Right ventricle myocardium inferior (tissue), 1 donor: ENCODE measurements at regions of chr15 and their contacts with region 1.

Region 1: GRCh38 chr15:40906091-40906990 is 12.1 kb downstream of the VPS18 start:
- DNase-seq: peak; percentile 92
- ATAC-seq: peak; percentile 85

Region 2: DNA sequence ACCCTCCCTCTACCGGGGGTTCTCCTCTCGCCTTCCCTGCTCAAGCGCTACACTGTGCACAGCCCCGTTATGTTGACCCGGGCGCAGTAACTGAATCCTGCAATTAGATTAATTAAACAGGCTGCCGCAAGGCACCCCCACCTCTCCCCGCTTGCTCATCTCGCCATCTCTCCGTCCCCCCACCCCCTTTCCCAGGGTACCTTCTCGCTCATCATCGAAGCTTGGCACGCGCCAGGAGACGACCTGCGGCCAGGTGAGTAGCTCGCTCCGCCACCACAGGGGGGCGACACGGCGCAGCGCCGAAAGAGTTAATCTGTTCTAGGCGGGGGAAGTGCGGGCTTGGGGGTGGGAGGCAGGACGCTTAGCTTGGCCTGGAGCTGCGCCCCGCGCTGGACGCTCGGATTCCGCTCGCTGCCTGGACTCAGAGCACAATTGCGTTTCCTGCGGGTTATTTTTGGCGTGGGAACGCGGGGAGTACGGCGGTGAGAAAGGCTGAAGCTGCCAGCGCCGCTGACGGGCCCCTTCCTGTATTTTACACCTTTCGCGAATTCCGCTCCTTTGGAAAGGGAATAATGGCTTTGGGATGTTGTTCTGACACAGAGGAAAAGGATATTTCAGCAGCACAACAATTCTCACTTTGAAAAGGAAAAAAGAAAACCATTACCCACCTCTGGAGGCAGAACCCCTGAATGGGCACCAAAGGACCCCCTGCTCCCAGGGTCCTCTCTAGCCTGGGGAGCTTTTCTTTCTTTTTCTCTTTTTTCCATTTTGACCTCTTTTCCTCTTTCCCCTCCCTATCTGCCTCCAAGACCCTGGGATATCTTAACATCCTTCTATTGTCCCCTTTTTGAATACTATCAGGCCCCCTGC is 24.3 kb after region 1 on chr15:
- intact Hi-C with region 1: loop called (anchors 1 kb)
- DNase-seq: no peak
- ATAC-seq: peak; percentile 38

Region 3: DNA sequence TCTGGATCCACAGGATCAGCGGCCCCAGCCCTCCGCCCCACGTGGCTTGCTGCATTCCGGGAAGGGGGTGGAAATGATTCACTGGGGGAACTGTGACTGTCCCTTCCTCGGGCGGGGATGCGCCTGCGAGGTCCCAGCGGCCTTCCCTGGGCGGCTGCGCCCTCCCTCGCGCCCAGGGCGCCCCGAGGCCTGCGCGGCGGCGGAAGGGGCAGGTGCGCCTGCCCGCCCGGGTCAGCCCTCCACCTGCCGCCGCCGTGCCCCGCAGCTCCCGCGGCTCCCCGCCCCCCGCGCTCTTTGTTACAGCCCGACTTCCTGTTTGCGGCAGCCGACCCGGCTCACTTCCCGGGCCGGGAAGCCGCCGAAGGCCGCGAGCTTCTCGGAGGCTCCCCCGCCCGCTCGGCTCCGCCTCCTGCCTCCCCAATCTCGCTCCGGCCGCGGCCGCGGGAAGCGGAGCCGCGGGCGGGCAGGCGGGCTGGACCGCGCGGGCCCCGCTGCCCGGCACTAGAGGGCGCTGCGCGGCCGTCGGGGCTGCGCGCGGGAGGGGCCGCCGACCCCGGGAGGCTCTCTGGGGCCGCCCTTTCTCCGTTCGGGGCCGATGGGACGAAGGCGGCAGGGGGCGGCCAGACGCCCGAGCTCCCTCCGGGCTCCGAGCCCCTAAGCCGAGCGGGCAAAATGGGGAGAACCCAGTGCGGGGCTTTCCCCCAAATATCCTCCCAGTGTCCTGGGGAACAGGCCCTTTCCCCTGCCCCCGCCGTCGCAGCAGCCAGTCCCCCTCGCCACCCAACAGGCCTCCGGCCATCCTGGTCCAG is 35.4 kb after region 1 on chr15:
- intact Hi-C with region 1: loop called (anchors 1 kb)
- DNase-seq: peak; percentile 89
- ATAC-seq: peak; percentile 86

Region 4: GRCh38 chr15:41022487-41023090 is 116.2 kb after region 1 on chr15:
- intact Hi-C with region 1: loop called (anchors 1 kb)
- DNase-seq: no peak
- ATAC-seq: no peak

Region 5: DNA sequence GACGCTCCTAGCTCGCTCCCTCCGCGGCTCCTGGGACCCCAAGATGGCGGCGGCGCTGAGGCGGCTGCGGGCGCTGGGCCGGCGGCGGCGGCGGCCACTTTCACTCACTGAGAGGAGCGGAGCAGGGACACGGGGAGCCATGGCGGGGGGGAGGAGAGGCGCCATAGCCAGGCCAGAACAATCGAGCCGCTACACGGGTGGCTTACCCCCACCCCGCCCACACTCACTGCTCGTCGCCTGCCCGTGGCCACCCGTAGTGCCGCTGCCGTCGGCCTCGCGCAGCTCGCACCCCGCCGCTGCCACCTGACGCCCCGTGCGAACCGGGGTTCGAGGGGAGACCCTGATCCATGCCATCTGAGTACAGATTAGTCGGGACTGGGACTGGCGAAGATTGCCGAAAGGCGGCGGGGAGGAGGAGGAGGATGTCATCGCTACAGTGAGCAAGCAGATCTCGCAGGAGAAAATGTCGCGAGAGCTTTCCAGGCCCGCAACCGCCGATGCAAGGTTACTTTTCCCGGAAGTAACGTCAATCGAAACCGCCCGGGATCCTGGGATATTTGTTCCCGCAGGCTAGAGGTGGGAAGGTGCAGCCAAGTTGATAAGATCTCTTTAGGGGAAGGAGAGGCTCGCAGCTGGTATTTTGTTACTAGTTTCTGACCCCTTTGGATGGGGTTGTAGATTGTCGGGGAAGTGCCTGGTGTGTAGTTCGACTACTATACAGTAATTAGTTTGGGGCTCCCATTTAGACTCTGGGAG is 210.0 kb after region 1 on chr15 and contains the start of gene INO80:
- intact Hi-C with region 1: loop called (anchors 5 kb)
- DNase-seq: peak; percentile 97
- ATAC-seq: peak; percentile 97
- total RNA-seq, gene INO80: 10.7 TPM

Region 6: DNA sequence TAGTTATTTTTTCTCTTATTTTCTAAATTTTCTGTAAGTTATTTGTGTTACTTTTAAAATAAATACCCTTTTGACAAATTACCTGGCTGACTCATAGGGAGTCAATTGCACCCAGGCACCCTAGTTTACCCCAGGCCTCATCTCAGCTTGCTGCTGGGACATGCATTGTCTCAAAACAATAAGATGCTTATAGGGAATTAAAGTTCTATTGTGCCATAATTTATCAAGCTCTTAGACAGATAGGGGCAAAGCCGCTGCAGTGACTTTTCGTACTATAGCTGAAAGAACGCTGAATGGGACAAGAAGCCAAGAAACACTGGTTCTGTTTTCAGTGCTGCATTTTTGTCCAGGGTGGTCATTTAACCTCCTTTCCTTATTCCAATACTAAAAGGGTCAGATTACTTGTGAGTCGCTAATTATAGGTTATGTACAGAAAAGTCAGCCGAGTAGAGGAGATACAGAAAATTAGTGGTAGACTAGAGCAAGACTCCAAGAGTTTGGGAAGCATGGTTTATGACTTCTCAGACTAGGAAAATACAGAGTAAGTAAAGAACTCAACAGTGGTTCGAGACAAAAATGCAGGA is 274.0 kb after region 1 on chr15:
- intact Hi-C with region 1: loop called (anchors 2 kb)
- DNase-seq: no peak
- ATAC-seq: no peak

Region 7: DNA sequence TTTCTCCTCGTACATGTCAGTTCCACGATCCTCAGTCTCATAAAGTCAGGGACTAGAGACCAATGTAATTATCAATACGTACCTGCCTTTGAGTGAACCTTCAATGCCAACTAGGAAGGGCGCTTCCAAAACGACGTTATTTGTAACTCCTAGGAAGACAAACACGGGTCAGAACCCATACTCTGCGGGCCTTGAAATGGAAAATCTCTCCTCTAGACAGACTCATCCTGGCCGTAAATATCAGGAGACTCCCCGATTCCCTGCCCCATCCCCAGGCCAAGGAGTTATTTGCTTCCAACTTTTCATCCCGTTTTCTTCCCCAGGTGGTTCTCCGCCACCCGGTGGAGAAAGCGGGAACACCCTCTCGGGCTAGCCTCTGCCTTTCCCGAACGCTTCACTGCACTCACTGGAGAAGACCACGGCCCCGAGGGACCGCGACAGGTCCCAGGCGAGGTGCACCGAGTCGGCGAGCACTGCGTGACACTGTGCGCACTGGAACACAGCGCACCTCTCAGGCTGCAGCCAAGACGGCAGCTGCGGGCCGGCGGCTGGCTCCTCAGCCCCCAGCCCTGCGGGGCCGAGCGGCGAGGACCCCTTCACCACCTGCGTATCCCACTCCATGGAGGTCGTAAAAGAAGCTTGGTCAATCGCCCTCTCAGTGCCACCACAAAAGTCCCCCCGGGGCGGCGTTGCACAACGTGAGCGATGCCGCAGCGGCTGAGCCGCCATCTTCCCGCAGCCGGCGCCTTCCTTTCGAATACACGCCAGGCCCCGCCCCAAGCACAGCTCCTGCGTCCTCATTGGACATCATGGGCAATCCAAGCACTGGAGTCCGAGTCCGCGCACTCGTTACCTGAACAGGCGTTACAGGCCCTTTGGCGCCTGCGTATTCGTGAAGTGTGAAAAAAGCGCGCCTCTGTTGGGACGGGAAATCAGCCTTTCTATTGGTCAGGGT is 425.8 kb after region 1 on chr15 and contains the start of gene OIP5:
- intact Hi-C with region 1: loop called (anchors 5 kb)
- DNase-seq: peak; percentile 99
- ATAC-seq: peak; percentile 100
- total RNA-seq, gene OIP5: 0.51 TPM